ENCODE measurements at regions of chr5 and their contacts with region 1.

Region 1: DNA sequence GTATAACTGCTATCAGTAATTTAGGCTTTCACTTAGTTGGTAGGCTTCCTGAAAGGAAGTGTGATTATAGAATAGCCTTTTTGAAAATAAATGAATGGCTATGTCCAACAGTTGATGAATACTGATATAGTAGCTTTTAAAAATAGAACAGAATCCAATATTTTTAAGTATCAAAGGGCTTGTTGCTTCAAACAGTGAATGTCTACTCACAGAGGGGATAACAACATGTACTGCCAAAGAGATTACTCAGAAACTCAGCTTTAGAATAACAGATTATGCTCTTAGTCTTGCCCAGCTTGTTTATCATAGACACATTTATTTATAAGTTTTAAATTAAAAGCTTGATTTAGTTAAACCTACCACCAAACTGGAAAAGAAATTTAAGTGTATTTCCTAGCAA is 132.6 kb downstream of the XRCC4 start:
- DNase-seq: no peak
- H3K4me3 ChIP-seq: no peak overlapping the region
- H3K27ac ChIP-seq: no peak overlapping the region
- H3K4me1 ChIP-seq: no peaks in the 10 kb centered on the region
- H3K27me3 ChIP-seq: no peaks in the 10 kb centered on the region
- CTCF ChIP-seq: no peak
- POLR2A ChIP-seq: no peak

Region 2: GRCh38 chr5:83172655-83173054 is 37.3 kb before region 1 on chr5:
- intact Hi-C with region 1: no loop called
- DNase-seq: no peak
- H3K4me3 ChIP-seq: no peak overlapping the region
- H3K27ac ChIP-seq: no peak overlapping the region
- H3K4me1 ChIP-seq: no peaks in the 10 kb centered on the region
- H3K27me3 ChIP-seq: no peaks in the 10 kb centered on the region
- CTCF ChIP-seq: no peak
- POLR2A ChIP-seq: no peak

Region 3: DNA sequence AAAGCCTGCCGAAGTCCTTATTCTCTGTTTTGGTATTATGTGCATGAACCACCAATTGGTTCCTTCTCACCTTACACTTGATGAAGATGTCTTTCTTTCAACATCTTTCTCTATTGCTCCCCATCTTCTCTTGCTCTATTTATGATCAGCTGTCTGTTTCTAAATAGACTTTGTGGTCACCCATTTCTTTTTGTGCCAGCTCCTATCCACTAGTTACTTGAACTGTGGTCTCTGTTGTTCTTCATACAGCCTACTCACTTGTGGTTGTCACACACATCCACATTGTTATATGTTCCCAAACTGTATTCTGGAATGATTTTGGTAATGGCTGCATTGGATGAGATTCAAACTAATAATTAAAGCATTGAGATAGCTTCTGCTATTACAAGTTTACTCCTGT is 273.0 kb after region 1 on chr5:
- intact Hi-C with region 1: loop called (anchors 5 kb)
- DNase-seq: no peak
- H3K4me3 ChIP-seq: no peak overlapping the region
- H3K27ac ChIP-seq: no peak overlapping the region
- H3K4me1 ChIP-seq: no peaks in the 10 kb centered on the region
- H3K27me3 ChIP-seq: no peaks in the 10 kb centered on the region
- CTCF ChIP-seq: no peak
- POLR2A ChIP-seq: no peak